OCI-LY7 (cell line): ENCODE measurements at regions of chr13 and their contacts with region 1.

Region 1: DNA sequence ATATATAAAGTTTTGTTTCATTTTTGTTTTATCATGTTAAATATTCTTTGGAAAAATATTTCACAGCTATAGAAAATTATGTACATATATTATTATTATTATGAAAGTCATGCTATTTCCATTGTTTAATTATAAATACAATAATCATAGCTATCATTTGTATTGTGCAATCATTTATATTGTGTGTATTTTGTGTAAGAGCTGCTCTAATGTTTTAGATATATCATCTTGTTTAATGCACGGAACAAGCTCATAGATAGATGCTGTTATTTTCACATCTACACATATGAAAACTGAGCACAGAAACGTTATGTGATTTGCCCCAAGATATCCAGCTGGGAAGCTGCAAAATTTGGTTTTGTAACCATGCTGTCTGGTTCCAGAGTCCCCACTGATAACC is 111.6 kb downstream of the GPC5 start:
- DNase-seq: no peak
- H3K4me3 ChIP-seq: no peak overlapping the region
- H3K27ac ChIP-seq: no peak overlapping the region
- H3K4me1 ChIP-seq: no peaks in the 10 kb centered on the region
- CTCF ChIP-seq: no peak

Region 2: DNA sequence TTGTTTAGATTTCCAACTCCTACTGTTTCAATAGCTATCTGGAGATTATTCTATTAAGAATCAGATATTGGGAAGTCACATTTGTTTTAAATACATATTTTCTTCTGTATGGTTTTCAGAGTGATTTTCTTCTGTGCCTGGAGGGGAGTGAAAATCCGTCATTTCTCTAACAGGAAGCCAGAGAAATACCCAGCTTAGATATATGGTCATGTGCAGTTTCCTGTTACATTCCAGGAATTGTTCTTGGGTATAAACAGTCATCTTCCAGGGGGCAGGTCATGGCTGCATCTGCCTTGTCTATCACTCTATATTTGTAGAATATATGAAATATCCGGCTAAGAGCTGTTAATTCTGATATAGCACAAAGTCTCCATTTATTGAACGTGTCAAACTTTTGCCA is 240.0 kb before region 1 on chr13:
- CTCF ChIA-PET with region 1: no interaction called
- POLR2A ChIA-PET with region 1: no interaction called
- intact Hi-C with region 1: no loop called
- DNase-seq: no peak
- H3K4me3 ChIP-seq: no peak overlapping the region
- H3K27ac ChIP-seq: no peak overlapping the region
- H3K4me1 ChIP-seq: no peaks in the 10 kb centered on the region
- CTCF ChIP-seq: no peak

Region 3: GRCh38 chr13:91491984-91492383 is 18.1 kb before region 1 on chr13:
- CTCF ChIA-PET with region 1: no interaction called
- POLR2A ChIA-PET with region 1: interaction called, 13 read pairs
- intact Hi-C with region 1: no loop called
- DNase-seq: no peak
- H3K4me3 ChIP-seq: no peak overlapping the region
- H3K27ac ChIP-seq: no peak overlapping the region
- H3K4me1 ChIP-seq: no peaks in the 10 kb centered on the region
- CTCF ChIP-seq: no peak

Region 4: GRCh38 chr13:91498298-91498697 is 11.8 kb before region 1 on chr13:
- CTCF ChIA-PET with region 1: no interaction called
- POLR2A ChIA-PET with region 1: interaction called, 13 read pairs
- intact Hi-C with region 1: no loop called
- DNase-seq: no peak
- H3K4me3 ChIP-seq: no peak overlapping the region
- H3K27ac ChIP-seq: no peak overlapping the region
- H3K4me1 ChIP-seq: no peaks in the 10 kb centered on the region
- CTCF ChIP-seq: no peak

Region 5: DNA sequence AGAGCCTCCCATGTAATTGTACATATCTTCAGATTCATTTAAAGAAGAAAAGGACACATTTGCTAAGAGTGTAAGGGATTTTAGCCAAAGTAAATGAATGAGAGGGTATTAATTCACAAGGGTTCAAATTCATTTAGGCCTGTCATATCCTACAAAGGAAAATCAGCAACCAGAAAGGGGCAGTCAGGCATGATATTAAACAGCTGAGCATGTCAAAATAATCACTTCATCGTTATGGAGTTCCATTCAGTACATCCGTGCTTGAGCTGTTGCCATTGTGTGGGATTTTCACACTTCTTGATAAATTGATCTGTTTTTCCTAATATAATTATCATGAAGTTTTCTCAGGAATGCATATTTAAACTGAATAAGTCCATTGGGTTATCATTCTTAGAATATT is 455.5 kb after region 1 on chr13:
- CTCF ChIA-PET with region 1: no interaction called
- POLR2A ChIA-PET with region 1: no interaction called
- intact Hi-C with region 1: no loop called
- DNase-seq: no peak
- H3K4me3 ChIP-seq: no peak overlapping the region
- H3K27ac ChIP-seq: no peak overlapping the region
- H3K4me1 ChIP-seq: no peaks in the 10 kb centered on the region
- CTCF ChIP-seq: no peak